ENCODE measurements at regions of chr17 and their contacts with region 1.

Region 1: GRCh38 chr17:66715745-66716156 is 119.2 kb upstream of the CACNG5 start:
- DNase-seq: no peak
- ATAC-seq: peak in 3 of 4 donors; percentile 19 to 64 (median 46)
- H3K4me3 ChIP-seq: no peak overlapping the region
- H3K27ac ChIP-seq: no peak overlapping the region
- H3K4me1 ChIP-seq: peaks cover 0 to 26% (median 3%) of the 10 kb centered on the region in 12 donors
- H3K27me3 ChIP-seq: no peaks in the 10 kb centered on the region
- CTCF ChIP-seq: peak; percentile 57 to 81 (median 69)
- POLR2A ChIP-seq: no peak

Region 2: DNA sequence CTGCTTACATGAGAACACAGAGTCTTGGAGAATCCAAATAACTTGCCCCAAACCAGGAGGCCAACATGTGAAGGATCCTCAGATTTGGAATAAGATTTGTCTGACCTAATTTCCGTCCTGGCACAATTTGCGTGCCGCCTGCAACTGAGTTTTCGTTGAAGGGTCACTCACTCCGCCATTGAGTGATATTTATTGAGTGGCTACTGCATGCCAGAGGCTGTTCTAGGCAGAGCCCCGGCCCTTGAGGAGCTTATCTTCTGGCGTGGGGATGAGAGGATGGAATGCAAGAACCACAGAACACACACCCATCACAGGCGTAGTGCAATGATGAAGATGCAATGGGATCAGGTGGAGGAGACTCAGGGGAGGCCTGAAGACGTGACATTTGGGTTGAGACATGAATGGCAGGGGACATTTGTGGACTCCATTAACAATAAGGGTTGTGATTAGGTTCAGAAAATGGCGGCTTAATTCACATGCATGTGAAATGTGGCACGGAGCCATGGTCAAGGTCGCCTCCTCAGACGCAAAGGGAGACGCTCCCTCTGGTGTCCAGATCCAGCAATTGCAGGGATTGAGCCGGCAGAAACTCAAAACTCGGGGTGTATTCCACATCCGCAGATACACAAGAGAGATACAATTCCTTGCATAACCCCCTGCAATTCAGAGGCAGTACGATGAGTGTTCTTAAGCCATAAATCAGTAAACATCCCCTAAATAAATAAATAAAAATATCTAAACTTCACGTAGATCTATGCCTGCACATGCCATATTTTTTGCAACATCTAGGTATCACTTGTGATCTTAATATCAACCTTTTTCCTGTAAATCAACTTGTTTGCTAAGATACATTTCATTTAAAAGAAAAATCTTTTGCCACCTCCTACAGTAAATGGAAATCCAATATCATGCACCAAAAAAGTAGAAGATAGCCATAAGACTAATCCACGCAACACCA is 190.8 kb after region 1 on chr17:
- intact Hi-C with region 1: loop called in 8 of 10 experiments (anchors 1 to 5 kb)
- DNase-seq: peak; percentile 72 to 89 (median 80)
- ATAC-seq: peak in 2 of 4 donors; percentile 36 to 48
- H3K4me3 ChIP-seq: no peak overlapping the region
- H3K27ac ChIP-seq: no peak overlapping the region
- H3K4me1 ChIP-seq: peaks cover 0 to 11% (median 6%) of the 10 kb centered on the region in 12 donors
- H3K27me3 ChIP-seq: peaks cover 0 to 4% (median 0%) of the 10 kb centered on the region in 9 donors
- CTCF ChIP-seq: peak; percentile 74 to 91 (median 82)
- POLR2A ChIP-seq: no peak

Region 3: DNA sequence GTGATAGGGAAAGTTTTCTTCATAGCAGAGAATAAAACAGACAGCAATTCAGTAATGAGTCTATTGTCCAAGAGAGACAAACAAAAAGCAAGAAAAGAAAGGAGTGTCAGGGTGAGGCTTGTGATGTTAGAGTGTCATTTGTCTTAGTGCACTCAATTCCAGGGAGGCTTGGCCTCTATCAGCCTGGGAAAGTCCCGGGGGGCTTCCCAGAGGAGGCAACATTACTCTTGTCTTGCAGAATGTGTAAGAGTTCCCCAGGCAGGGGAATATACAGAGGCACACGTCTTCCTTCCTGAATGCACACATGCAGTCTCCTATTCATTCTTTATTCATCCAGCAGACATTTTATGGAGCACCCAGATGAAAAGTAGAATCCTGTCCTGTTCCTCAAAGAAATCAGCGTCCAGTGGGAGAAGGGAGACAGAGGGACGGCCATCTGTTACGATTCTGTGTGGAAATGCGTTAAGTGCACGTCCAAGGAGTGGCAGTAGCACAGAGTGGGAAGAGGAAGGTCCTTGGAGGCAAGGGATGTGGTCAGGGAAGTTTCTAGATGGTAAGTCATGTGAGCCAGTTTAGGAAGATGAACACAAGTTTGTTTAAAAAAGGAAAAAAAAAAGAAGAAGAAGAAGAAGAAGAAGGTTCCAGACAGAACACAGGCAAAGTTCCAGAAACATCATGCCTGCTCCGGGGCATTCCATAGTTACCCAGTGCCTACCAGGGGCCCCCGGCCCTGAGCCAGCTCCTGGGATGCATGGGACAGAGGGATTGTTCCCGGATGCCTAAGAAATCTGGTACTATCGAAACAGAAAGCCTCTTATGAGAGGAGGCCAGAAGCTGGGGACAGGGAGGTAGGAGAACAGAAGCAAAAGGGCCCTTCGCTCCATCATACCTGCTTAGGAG is 269.8 kb after region 1 on chr17:
- intact Hi-C with region 1: loop called in 1 of 10 experiments (anchors 10 kb)
- DNase-seq: peak in 1 of 5 donors; percentile 26
- ATAC-seq: no peak
- H3K4me3 ChIP-seq: no peak overlapping the region
- H3K27ac ChIP-seq: no peak overlapping the region
- H3K4me1 ChIP-seq: no peaks in the 10 kb centered on the region
- H3K27me3 ChIP-seq: peaks cover 0 to 57% (median 12%) of the 10 kb centered on the region in 9 donors
- CTCF ChIP-seq: no peak
- POLR2A ChIP-seq: no peak

Region 4: DNA sequence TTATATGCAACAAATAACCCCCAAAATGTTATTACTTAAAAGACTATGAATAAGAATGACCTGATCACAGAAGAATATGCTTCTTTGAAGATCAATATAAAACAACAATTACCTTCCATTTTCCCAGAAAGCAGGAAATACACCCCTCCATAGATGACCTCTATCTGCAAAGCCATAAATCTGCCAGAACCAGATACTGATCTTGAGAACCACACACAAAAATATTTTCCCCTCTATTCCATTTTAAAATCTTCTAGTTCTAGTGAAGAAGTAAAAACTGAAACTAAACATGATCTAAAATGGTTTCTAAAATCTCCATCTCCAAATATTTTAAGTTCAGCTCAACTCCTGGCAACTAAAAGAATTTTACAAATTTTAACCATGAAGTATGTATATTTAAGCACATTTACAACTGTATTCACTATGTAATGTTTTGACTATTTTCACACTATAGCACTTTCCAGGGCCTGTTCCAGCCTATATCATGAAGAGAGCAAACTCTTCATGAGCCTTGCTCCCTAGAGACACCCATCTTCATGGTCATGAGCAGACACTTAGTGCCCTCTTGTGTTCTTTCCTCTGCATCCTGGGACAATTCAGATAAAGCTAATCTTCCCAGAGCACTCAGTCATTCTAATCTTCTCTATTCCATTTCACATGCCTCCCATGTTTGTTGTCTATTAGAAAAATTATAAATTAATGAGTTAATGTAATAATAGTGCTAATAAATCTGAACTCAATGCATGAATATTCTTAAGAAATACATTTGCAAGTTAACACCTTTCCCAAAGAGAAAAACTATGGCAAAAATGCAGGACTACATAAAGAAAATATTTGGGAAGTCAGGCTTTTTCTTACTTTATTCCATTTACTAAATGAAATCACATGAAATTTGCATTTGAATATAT is 442.2 kb after region 1 on chr17:
- intact Hi-C with region 1: loop called in 6 of 10 experiments (anchors 10 kb)
- DNase-seq: no peak
- ATAC-seq: peak in 3 of 4 donors; percentile 69 to 72 (median 69)
- H3K4me3 ChIP-seq: no peak overlapping the region
- H3K27ac ChIP-seq: no peak overlapping the region
- H3K4me1 ChIP-seq: peaks cover 0 to 5% (median 0%) of the 10 kb centered on the region in 12 donors
- H3K27me3 ChIP-seq: no peaks in the 10 kb centered on the region
- CTCF ChIP-seq: peak in 6 of 12 donors; percentile 13 to 42 (median 31)
- POLR2A ChIP-seq: no peak

Region 5: DNA sequence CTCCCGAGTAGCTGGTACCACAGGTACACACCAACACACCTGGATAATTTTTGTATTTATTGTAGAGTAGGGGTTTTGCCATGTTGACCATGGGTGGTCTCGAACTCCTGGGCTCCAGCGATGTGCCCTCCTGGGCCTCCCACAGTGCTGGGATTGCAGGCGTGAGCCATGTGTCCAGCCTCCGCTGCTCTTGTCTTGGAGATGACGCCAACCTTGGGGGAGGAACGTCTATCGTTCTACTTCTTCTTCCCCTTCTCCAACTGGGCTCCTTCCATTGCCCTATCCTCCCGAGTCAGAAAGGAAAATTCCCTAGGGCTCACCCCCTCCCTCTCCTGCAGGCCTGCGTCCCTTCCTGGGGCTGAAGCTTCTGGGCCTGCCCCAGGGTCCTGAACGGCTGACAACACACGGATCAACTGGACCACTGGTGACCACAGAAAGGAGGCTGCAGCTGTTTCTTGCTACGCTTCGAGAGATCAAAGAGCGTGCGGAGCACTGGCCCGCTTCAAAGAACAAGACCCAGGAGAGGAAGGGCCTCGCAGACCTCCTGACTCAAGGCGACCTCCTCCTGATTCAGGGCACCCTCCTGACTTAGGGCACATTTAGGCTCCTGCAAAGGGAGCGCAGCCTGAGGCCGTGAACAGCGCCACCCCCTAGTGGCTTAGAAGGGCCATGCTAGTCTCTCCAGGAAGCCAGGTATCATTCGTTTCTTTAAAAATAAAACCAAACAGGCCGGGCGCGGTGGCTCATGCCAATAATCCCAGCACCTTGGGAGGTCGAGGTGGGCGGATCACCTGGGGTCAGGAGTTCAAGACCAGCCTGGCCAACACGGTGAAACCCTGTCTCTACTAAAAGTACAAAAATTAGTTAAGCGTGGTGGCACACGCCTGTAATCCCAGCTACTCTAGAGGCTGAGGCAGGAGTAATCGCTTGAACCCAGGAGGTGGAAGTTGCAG is 577.8 kb after region 1 on chr17:
- intact Hi-C with region 1: loop called in 2 of 10 experiments (anchors 5 to 10 kb)
- DNase-seq: peak; percentile 58 to 84 (median 63)
- ATAC-seq: peak; percentile 45 to 79 (median 74)
- H3K4me3 ChIP-seq: peak overlapping the region in 3 of 12 donors; percentile 2 to 38 (median 20)
- H3K27ac ChIP-seq: peak overlapping the region in 1 of 12 donors; percentile 24
- H3K4me1 ChIP-seq: peaks cover 0 to 28% (median 19%) of the 10 kb centered on the region in 12 donors
- H3K27me3 ChIP-seq: no peaks in the 10 kb centered on the region
- CTCF ChIP-seq: peak; percentile 65 to 89 (median 82)
- POLR2A ChIP-seq: no peak

Region 6: DNA sequence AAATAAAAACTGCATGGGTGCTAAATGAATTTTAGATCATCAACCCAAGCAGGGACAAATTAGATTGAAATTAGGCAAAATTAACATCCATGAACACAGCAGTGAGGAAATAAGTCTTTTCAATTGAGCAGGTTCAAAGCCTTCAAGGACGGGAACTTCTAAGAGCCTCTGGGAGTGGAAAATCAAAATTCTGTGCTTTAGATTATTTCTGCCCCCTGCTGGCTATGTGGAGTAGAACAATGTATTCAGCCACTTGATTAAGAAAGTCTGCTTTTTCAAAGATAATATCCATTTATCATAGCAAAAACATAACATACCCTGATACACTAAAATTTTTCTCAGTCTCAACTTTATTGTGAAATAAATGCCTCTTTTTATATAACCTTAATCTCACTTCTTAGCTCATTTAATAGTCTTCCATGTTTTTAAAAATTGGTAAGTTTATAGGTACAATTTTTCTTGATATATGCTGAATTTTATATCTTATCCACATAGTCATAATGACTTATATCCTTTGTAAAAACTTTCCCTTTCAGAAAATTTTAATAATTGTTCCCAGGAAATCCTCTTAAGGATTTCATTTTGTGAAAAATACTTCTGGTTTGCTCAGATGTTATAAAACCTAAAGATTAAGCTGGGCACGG is 973.9 kb after region 1 on chr17:
- intact Hi-C with region 1: loop called in 1 of 10 experiments (anchors 5 kb)
- DNase-seq: peak in 2 of 5 donors; percentile 25 to 41
- ATAC-seq: peak in 3 of 4 donors; percentile 52 to 66 (median 58)
- H3K4me3 ChIP-seq: no peak overlapping the region
- H3K27ac ChIP-seq: no peak overlapping the region
- H3K4me1 ChIP-seq: peaks cover 0 to 6% (median 0%) of the 10 kb centered on the region in 12 donors
- H3K27me3 ChIP-seq: no peaks in the 10 kb centered on the region
- CTCF ChIP-seq: peak; percentile 67 to 86 (median 82)
- POLR2A ChIP-seq: no peak

Measured in heart left ventricle (tissue), 16 donors.